Common myeloid progenitor, CD34-positive (primary cell): ENCODE measurements at regions of chr15 and their contacts with region 1.

Region 1: GRCh38 chr15:52171386-52171785 is 19.8 kb downstream of the GNB5 start:
- DNase-seq: peak; percentile 38 to 68 (median 57)
- H3K4me3 ChIP-seq: peak overlapping the region in 4 of 7 experiments; percentile 0 to 49 (median 32)
- H3K27ac ChIP-seq: no peak overlapping the region
- H3K4me1 ChIP-seq: peaks cover 3 to 26% (median 21%) of the 10 kb centered on the region in 4 experiments
- H3K27me3 ChIP-seq: no peaks in the 10 kb centered on the region

Region 2: DNA sequence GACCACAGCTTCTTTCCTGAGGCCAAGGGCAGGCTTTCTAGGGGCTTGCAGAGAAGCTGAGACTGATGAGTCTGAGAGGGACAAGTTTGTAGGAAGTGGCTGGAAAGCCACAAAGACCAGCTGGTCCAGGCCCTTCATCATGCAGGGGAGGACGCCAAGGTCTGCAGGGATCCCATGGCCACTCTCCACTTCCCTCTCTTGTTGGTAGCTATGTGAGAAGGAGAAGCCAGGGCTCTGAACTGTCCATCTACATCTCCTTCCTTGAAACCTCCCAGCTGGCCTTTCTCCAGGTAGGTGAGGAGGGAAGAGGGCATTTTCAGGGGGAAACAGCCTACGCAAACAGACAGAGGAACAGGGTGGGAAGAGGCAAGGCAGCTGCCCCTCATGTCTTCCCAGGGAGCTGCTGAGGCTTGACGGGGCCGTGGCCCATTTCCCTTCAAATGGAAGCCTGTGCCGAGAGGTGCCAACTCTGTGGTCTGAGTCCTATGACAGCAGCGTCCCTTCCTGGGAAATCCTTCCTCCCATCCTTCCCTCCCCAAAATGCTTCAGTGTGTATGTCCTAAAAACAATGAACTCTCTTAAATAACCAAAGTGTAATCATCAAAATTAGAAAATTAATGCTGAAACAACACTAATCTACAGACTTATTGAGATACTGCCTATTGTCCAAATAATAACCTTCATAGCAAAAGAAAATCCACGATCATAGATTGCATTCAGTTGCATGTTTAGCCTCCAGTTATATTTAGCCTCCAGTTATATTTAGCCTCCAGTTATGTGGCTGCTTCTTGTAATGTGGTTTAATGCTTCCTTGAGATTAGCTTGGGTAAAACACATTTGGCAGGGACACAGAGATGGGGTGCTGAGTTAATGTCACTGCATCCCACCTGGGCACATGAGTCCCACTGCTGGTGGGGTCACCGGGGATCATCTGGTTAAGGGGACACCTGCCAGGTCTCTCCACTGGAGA is 16.2 kb before region 1 on chr15:
- CTCF ChIA-PET with region 1: interaction called, 25 read pairs
- POLR2A ChIA-PET with region 1: interaction called, 4 read pairs
- DNase-seq: peak in 2 of 3 donors; percentile 28 to 31
- H3K4me3 ChIP-seq: peak overlapping the region in 1 of 7 experiments; percentile 4
- H3K27ac ChIP-seq: no peak overlapping the region
- H3K4me1 ChIP-seq: peaks cover 0 to 18% (median 14%) of the 10 kb centered on the region in 4 experiments
- H3K27me3 ChIP-seq: no peaks in the 10 kb centered on the region